Dorsolateral prefrontal cortex (tissue), 120 donors: ENCODE measurements at regions of chr7 and their contacts with region 1.

Region 1: GRCh38 chr7:132580717-132581285 is 4.5 kb upstream of the PLXNA4 start:
- DNase-seq: peak in 9 of 10 donors; percentile 48 to 80 (median 73)
- H3K4me3 ChIP-seq: no peak overlapping the region
- H3K27ac ChIP-seq: no peak overlapping the region
- H3K27me3 ChIP-seq: peaks cover 0 to 6% (median 0%) of the 10 kb centered on the region in 45 donors
- CTCF ChIP-seq: peak; percentile 65 to 92 (median 81)

Region 2: GRCh38 chr7:131688738-131689661 is 891.8 kb before region 1 on chr7:
- intact Hi-C with region 1: loop called (anchors 2 to 5 kb)
- DNase-seq: peak in 9 of 10 donors; percentile 54 to 78 (median 68)
- H3K4me3 ChIP-seq: no peak overlapping the region
- H3K27ac ChIP-seq: no peak overlapping the region
- H3K27me3 ChIP-seq: peaks cover 0 to 20% (median 0%) of the 10 kb centered on the region in 45 donors
- CTCF ChIP-seq: peak; percentile 80 to 98 (median 95)

Region 3: GRCh38 chr7:131945313-131945911 is 635.4 kb before region 1 on chr7:
- intact Hi-C with region 1: loop called (anchors 2 to 10 kb)
- DNase-seq: peak; percentile 40 to 76 (median 61)
- H3K4me3 ChIP-seq: peak overlapping the region; percentile 5 to 66 (median 48)
- H3K27ac ChIP-seq: peak overlapping the region in 2 of 59 donors; percentile 46 to 61
- H3K27me3 ChIP-seq: peaks cover 0 to 18% (median 0%) of the 10 kb centered on the region in 45 donors
- CTCF ChIP-seq: peak; percentile 53 to 94 (median 87)

Region 4: DNA sequence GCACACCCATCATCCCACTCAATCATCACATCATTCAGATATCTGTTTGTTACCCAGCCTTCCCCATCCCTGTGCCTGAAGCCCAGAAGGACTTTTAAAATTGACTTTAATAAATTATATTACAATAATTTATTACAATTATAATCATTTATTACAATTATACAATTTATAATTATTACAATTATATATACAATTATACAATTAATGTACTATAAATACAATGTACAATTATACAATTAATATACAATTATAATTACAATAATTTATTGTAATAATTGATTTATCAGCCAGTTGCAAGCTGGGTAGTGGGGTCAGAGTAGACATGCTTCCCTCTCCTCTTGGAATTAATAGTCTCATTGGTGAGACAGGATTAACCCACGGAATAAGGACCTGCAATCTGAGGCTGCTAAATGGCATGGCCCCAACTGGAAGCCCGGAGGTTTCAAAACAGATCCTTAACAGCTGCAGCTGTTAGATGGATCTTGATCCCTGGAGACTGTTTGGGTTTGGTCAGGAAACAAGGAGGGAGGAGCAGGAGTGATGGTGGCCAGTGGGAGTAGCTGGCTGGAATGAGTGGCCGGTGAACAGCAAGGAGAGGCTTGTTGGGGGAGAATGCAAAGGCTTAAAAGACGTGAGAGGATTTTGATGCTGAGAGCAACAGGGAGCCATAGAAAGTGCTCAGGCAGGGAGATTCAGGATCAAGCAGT is 621.5 kb before region 1 on chr7:
- intact Hi-C with region 1: loop called in 1 of 2 experiments (anchors 10 kb)
- DNase-seq: no peak
- H3K4me3 ChIP-seq: no peak overlapping the region
- H3K27ac ChIP-seq: no peak overlapping the region
- H3K27me3 ChIP-seq: peaks cover 0 to 8% (median 0%) of the 10 kb centered on the region in 45 donors
- CTCF ChIP-seq: no peak

Region 5: GRCh38 chr7:132318352-132319318 is 262.2 kb before region 1 on chr7:
- intact Hi-C with region 1: loop called (anchors 1 to 2 kb)
- DNase-seq: peak; percentile 81 to 92 (median 87)
- H3K4me3 ChIP-seq: peak overlapping the region in 21 of 59 donors; percentile 1 to 56 (median 20)
- H3K27ac ChIP-seq: peak overlapping the region in 2 of 59 donors; percentile 3 to 8
- H3K27me3 ChIP-seq: peaks cover 0 to 19% (median 2%) of the 10 kb centered on the region in 45 donors
- CTCF ChIP-seq: peak; percentile 85 to 98 (median 93)

Region 6: GRCh38 chr7:133434055-133434865 is 853.5 kb after region 1 on chr7:
- intact Hi-C with region 1: loop called in 1 of 2 experiments (anchors 10 kb)
- DNase-seq: peak in 1 of 10 donors; percentile 7
- H3K4me3 ChIP-seq: peak overlapping the region in 2 of 59 donors; percentile 2 to 35
- H3K27ac ChIP-seq: peak overlapping the region in 1 of 59 donors; percentile 4
- H3K27me3 ChIP-seq: no peaks in the 10 kb centered on the region
- CTCF ChIP-seq: peak in 55 of 56 donors; percentile 27 to 77 (median 56)